ENCODE measurements at regions of chr18 and their contacts with region 1.

Region 1: DNA sequence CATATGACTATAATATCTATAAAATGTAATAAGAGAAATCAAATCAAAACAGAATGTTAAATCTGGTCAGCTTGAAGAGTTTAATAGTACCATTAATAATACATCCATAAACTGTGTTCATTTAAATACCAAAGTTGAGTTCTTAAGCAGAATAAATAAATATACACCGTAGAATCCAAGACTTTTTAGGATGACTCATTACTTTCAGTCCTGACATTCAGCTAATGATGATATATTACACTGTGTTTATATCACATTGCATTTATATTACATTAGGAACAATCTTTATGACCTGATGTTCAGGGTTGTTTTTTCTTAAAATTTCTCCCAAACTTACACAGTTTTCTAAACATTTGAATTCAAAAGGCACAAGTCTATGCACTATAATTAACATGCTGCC is 331.3 kb downstream of the SS18 start:
- DNase-seq: no peak
- H3K4me3 ChIP-seq: no peak overlapping the region
- H3K27ac ChIP-seq: no peak overlapping the region
- H3K4me1 ChIP-seq: no peaks in the 10 kb centered on the region
- H3K27me3 ChIP-seq: no peaks in the 10 kb centered on the region
- CTCF ChIP-seq: no peak
- EP300 ChIP-seq: no peak
- POLR2A ChIP-seq: no peak
- RAD21 ChIP-seq: no peak

Region 2: DNA sequence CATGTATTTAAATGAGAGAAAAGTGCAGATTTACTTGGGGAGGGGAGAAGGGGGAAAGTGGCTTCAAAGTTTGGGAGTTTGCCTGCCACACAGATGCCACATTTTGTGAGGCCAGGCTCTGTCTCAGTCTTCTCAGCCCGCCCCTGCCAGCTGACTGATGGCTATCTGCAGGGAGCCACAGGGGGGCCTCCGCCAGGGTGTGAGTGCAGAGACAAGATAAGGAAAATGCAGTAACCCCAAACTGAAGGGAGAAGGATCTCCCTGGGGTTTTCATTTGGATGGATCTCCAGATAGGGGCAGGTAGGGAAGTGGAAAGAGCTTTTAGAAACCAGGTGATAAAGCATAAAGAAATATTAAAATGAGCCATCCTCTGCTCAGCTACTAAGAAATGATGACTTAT is 535.9 kb before region 1 on chr18:
- CTCF ChIA-PET with region 1: no interaction called
- POLR2A ChIA-PET with region 1: no interaction called
- DNase-seq: peak; percentile 2 to 64
- H3K4me3 ChIP-seq: no peak overlapping the region
- H3K27ac ChIP-seq: no peak overlapping the region
- H3K4me1 ChIP-seq: no peaks in the 10 kb centered on the region; a peak in 1 of 7 replicates
- H3K27me3 ChIP-seq: no peaks in the 10 kb centered on the region
- CTCF ChIP-seq: no peak
- EP300 ChIP-seq: no peak
- POLR2A ChIP-seq: no peak
- RAD21 ChIP-seq: peak in 1 of 2 experiments; percentile 32; a peak in 1 of 4 replicates

Region 3: GRCh38 chr18:25686960-25687520 is 72.1 kb before region 1 on chr18:
- CTCF ChIA-PET with region 1: no interaction called
- POLR2A ChIA-PET with region 1: no interaction called
- DNase-seq: no peak
- H3K4me3 ChIP-seq: no peak overlapping the region
- H3K27ac ChIP-seq: no peak overlapping the region
- H3K4me1 ChIP-seq: no peaks in the 10 kb centered on the region; a peak in 1 of 7 replicates
- H3K27me3 ChIP-seq: no peaks in the 10 kb centered on the region
- CTCF ChIP-seq: no peak
- EP300 ChIP-seq: no peak
- POLR2A ChIP-seq: no peak
- RAD21 ChIP-seq: no peak

Region 4: GRCh38 chr18:25743646-25744151 is 15.4 kb before region 1 on chr18:
- CTCF ChIA-PET with region 1: interaction called, 17 read pairs
- POLR2A ChIA-PET with region 1: no interaction called
- DNase-seq: peak; percentile 56 to 73
- H3K4me3 ChIP-seq: peak overlapping the region in 1 of 4 experiments; percentile 16; a peak in 1 of 8 replicates
- H3K27ac ChIP-seq: no peak overlapping the region
- H3K4me1 ChIP-seq: peaks cover 0 to 6% (median 2%) of the 10 kb centered on the region in 4 experiments; a peak in 4 of 7 replicates
- H3K27me3 ChIP-seq: no peaks in the 10 kb centered on the region
- CTCF ChIP-seq: peak; percentile 64 to 98 (median 81)
- EP300 ChIP-seq: peak in 1 of 2 experiments; percentile 76; a peak in 1 of 3 replicates
- POLR2A ChIP-seq: no peak
- RAD21 ChIP-seq: peak; percentile 56 to 72

Region 5: GRCh38 chr18:26017929-26018328 is 258.8 kb after region 1 on chr18:
- CTCF ChIA-PET with region 1: no interaction called
- POLR2A ChIA-PET with region 1: no interaction called
- DNase-seq: no peak
- H3K4me3 ChIP-seq: no peak overlapping the region
- H3K27ac ChIP-seq: no peak overlapping the region
- H3K4me1 ChIP-seq: peaks cover 1 to 6% (median 5%) of the 10 kb centered on the region in 4 experiments; a peak in 4 of 7 replicates
- H3K27me3 ChIP-seq: no peaks in the 10 kb centered on the region
- CTCF ChIP-seq: no peak
- EP300 ChIP-seq: no peak
- POLR2A ChIP-seq: no peak
- RAD21 ChIP-seq: 0 out of 4 replicates have a peak, but pooled peaks of 1 of the 2 experiments have one; percentile 4